Left cardiac atrium (tissue), 4 donors: ENCODE measurements at regions of chr1 and their contacts with region 1.

Region 1: GRCh38 chr1:21368515-21369289 is 71.2 kb upstream of the NBPF3 start:
- DNase-seq: peak; percentile 83
- ATAC-seq: peak; percentile 94 to 96

Region 2: DNA sequence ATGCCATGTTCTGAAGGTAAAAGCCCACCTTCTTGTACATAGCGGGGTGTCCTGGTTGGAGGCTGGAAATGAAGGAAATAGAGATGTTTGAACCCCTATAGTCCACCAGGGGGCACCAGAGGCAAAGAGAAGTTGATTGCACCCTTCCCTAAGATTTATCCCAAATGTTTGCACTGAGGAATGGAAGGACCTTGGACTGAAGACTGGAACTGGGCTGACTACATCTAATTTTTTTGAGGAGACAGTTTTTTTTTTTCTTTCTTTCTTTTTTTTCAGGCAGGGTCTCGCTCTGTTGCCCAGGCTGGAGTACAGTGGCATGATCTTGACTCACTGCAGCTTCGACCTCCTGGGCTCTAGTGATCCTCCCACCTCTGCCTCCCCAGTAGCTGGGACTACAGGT is 136.7 kb before region 1 on chr1:
- intact Hi-C with region 1: loop called (anchors 1 to 2 kb)
- DNase-seq: no peak
- ATAC-seq: peak; percentile 67 to 69

Region 3: GRCh38 chr1:21255278-21255942 is 113.3 kb before region 1 on chr1:
- intact Hi-C with region 1: loop called in 1 of 2 experiments (anchors 1 kb)
- DNase-seq: peak; percentile 93
- ATAC-seq: peak; percentile 82 to 90

Region 4: GRCh38 chr1:21594935-21595897 is 226.5 kb after region 1 on chr1:
- intact Hi-C with region 1: loop called in 1 of 2 experiments (anchors 5 kb)
- DNase-seq: peak; percentile 77
- ATAC-seq: peak in 1 of 2 donors; percentile 24

Region 5: GRCh38 chr1:21659099-21659923 is 290.6 kb after region 1 on chr1:
- intact Hi-C with region 1: loop called (anchors 5 kb)
- DNase-seq: peak; percentile 77
- ATAC-seq: peak; percentile 82 to 84

Region 6: DNA sequence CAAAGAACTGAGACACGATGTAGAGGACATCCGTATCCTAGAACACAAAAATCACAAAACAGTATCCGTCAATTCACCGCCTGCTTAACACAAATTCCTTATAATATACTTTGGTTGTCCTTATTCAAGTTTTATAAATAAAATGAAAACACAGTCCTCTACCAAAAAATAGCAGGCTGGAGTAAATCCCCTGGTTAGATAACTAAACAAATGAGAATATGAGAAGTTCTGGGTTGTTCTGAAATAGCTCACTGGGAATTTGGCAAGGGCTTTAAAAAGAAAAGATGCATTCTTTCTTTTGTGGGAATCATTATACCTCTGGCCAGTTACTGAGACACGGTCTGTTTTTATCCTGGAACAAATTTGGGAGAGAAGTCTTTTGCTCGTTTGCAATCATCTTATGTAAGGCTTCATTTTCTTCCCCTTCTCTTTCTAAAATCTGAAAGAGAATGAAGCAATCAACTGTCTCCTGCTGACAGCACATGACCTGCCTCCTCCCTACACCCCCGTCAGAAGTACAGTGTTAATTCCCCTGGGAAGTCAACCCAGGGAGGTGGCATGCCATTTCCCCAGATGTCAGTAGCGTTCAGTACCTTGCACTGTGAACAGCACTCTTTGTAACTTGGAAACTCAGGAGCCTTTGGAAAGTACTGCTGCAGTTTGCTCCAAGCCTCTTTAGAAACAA is 337.6 kb after region 1 on chr1:
- intact Hi-C with region 1: no loop called
- DNase-seq: no peak
- ATAC-seq: peak; percentile 25 to 70